ENCODE measurements at regions of chr6 and their contacts with region 1.

Region 1: DNA sequence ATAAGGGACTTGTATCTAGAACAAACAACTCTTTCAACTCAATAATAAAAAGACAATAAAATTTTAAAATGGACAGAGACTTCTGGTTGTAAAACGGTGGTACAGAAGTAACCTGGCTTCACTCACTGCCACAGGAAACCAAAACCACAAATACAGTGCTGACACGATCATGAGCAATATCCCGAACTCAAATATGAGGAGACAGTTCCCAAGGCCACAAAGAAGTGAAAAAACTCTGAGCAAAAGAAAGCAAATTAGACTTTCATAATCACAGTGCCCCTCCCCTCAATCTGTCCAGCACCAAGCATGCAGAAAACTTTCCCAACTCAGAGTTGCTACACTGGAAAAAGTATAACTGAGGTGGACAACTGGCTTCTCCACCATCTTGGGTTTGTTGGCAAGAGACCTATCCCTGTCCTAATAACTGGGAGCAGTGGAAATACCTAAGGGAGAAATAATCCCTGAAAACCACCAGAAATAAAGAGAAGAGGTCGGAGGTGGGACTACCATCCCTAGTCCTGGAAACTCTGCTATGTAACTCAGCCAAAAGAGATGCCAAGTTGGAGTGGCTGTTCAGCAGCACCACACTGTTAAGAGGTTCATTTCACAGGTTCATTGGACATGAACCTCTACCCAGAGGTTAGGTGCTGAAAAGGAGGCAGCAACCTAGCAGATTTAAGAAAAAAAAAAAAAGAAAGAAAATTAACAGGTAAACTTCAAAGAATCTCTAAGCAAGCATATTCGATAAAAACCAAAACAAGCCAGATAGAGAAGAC is 55.5 kb downstream of the REV3L start:
- DNase-seq: peak; percentile 54
- H3K4me3 Mint-ChIP-seq: no peak overlapping the region
- H3K27ac Mint-ChIP-seq: no peak overlapping the region
- H3K4me1 Mint-ChIP-seq: peaks cover 44% of the 10 kb centered on the region
- H3K27me3 Mint-ChIP-seq: no peaks in the 10 kb centered on the region

Region 2: DNA sequence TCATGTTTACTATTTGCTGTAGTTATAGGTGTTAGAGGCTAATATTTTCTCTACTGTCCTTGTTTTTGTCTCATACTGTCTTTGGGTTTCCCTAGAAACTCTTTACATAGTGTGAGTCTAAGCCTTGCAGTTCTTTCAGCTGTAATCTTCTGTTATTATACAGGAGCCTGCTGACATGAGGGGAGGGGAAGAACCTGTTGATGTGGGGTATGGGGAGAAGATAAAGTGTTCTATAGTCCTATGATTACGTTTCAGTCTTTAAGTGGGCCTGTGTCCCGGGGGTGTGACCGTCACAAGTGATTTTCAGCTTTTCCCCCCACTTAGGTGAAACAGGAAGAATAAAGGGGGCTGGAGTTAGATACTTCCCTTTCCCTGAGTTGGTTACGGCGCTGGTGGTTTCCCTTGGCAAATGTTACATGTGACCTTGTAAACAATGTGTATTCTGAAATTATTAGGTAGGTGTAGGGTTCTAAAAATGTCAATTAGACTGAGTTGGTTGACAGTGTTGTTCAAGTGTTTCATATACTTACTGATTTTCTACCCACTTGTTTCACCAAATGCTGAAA is 14.2 kb after region 1 on chr6:
- CTCF ChIA-PET with region 1: no interaction called
- intact Hi-C with region 1: loop called (anchors 2 kb)
- DNase-seq: no peak
- H3K4me3 Mint-ChIP-seq: no peak overlapping the region
- H3K27ac Mint-ChIP-seq: no peak overlapping the region
- H3K4me1 Mint-ChIP-seq: peaks cover 13% of the 10 kb centered on the region
- H3K27me3 Mint-ChIP-seq: no peaks in the 10 kb centered on the region

Region 3: GRCh38 chr6:111472933-111473435 is 45.5 kb after region 1 on chr6:
- CTCF ChIA-PET with region 1: interaction called, 4 read pairs
- intact Hi-C with region 1: loop called (anchors 2 kb)
- DNase-seq: no peak
- H3K4me3 Mint-ChIP-seq: no peak overlapping the region
- H3K27ac Mint-ChIP-seq: no peak overlapping the region
- H3K4me1 Mint-ChIP-seq: peaks cover 36% of the 10 kb centered on the region
- H3K27me3 Mint-ChIP-seq: no peaks in the 10 kb centered on the region

Measured in activated naive CD4-positive, alpha-beta T cell treated with anti-CD3 and anti-CD28 coated beads for 36 hours (primary cell).